Activated CD4-positive, alpha-beta T cell treated with anti-CD3 and anti-CD28 coated beads for 36 hours (primary cell): ENCODE measurements at regions of chr4 and their contacts with region 1.

Region 1: GRCh38 chr4:140359562-140360427 is 13.7 kb upstream of the SCOC start:
- DNase-seq: peak; percentile 89
- ATAC-seq: peak; percentile 97
- H3K4me3 Mint-ChIP-seq: no peak overlapping the region
- H3K27ac Mint-ChIP-seq: no peak overlapping the region
- H3K4me1 Mint-ChIP-seq: no peaks in the 10 kb centered on the region
- H3K27me3 Mint-ChIP-seq: peaks cover 3% of the 10 kb centered on the region

Region 2: GRCh38 chr4:140012688-140013486 is 346.9 kb before region 1 on chr4:
- CTCF ChIA-PET with region 1: interaction called, 15 read pairs
- POLR2A ChIA-PET with region 1: no interaction called
- intact Hi-C with region 1: loop called (anchors 1 to 2 kb)
- DNase-seq: peak; percentile 64
- ATAC-seq: peak; percentile 73
- H3K4me3 Mint-ChIP-seq: no peak overlapping the region
- H3K27ac Mint-ChIP-seq: no peak overlapping the region
- H3K4me1 Mint-ChIP-seq: peaks cover 9% of the 10 kb centered on the region
- H3K27me3 Mint-ChIP-seq: peaks cover 5% of the 10 kb centered on the region

Region 3: DNA sequence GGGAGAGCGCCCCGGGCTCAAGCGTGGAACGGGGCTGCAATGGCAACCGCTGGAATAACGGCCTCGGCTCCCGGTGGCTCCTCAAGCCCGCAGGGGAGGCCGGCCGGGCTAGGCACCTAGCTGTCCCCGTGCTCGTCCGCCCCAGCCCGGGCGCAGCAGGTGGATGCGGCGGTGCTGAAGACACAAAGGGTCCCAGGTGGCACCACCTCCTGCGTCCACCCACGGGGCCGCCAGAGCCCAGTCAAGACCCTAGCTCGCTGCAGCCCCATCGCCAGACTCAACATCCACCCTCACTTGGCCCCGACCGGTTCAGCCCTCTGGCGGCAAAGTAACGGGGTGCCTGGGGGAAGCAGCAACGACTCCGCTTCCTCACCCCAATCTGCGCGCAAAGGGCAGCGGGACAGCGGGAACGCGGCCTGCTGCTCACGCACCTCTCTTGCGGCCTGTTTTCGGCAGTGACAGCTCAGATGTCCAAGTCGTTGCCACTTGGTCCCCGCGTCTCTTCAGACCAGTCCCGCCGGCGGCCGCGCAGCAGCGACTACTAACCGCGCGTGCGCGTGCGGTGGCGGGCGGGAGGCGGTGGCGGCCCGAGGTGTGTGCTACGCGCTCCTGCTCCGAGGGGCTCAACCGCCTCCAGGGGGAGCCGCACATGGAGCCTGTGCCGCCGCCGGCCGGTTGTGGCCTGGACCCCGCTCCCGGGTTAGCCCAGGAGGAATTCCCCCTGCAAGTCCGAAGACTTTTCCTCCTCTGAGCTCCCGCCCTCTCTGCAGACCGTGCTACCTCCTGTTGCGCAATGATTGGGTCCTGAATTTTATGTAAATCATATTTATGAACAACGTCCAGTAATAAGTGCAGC is 67.5 kb after region 1 on chr4 and contains the start of gene CLGN:
- CTCF ChIA-PET with region 1: interaction called, 3 read pairs
- POLR2A ChIA-PET with region 1: no interaction called
- intact Hi-C with region 1: loop called in 1 of 2 experiments (anchors 2 kb)
- DNase-seq: peak; percentile 74
- ATAC-seq: peak; percentile 88
- H3K4me3 Mint-ChIP-seq: peak within 1 kb of the TSS; percentile 72
- H3K27ac Mint-ChIP-seq: peak within 1 kb of the TSS; percentile 20
- H3K4me1 Mint-ChIP-seq: peaks cover 5% of the 10 kb centered on the region
- H3K27me3 Mint-ChIP-seq: peaks cover 40% of the 10 kb centered on the region
- total RNA-seq, gene CLGN: 0.18 to 0.19 TPM

Region 4: GRCh38 chr4:140637836-140638235 is 278.0 kb after region 1 on chr4:
- CTCF ChIA-PET with region 1: interaction called, 16 read pairs
- POLR2A ChIA-PET with region 1: no interaction called
- intact Hi-C with region 1: loop called (anchors 1 kb)
- DNase-seq: peak; percentile 64
- ATAC-seq: peak; percentile 76
- H3K4me3 Mint-ChIP-seq: no peak overlapping the region
- H3K27ac Mint-ChIP-seq: no peak overlapping the region
- H3K4me1 Mint-ChIP-seq: no peaks in the 10 kb centered on the region
- H3K27me3 Mint-ChIP-seq: peaks cover 4% of the 10 kb centered on the region

Region 5: DNA sequence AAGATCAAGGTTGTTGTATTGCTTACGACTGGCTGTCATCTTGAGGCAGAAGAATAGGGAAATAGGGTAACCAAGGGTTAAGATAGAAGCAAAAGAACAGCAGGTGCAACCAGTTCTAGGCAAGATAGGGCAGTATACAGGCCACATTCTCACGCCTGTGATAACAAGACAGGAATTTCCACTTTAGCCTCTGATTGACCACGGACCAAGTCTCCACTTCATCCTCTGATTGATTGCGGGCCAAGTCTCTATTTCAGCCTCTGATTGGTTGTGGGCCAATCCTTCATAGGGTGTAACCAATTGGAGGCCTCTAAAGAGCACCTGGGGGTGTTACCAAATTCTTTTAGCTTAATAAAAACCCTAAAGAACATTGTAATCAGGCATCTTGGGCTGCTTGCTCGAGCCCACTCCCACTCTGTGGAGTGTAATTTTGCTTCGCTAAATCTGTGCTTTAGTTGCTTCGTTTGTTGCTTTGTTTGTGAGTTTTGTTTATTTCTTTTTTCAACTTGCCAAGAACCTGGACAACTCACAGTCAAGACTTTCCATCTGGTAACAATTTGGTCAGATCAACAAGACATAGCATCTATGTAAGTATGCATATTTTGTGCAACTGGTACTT is 405.1 kb after region 1 on chr4:
- CTCF ChIA-PET with region 1: no interaction called
- POLR2A ChIA-PET with region 1: no interaction called
- intact Hi-C with region 1: no loop called
- DNase-seq: no peak
- ATAC-seq: no peak
- H3K4me3 Mint-ChIP-seq: no peak overlapping the region
- H3K27ac Mint-ChIP-seq: no peak overlapping the region
- H3K4me1 Mint-ChIP-seq: no peaks in the 10 kb centered on the region
- H3K27me3 Mint-ChIP-seq: peaks cover 19% of the 10 kb centered on the region

Region 6: GRCh38 chr4:141133146-141133998 is 773.6 kb after region 1 on chr4 and contains the start of gene RNF150:
- CTCF ChIA-PET with region 1: no interaction called
- POLR2A ChIA-PET with region 1: no interaction called
- intact Hi-C with region 1: loop called in 1 of 2 experiments (anchors 5 kb)
- DNase-seq: peak; percentile 80
- ATAC-seq: peak; percentile 80
- H3K4me3 Mint-ChIP-seq: peak within 1 kb of the TSS; percentile 78
- H3K27ac Mint-ChIP-seq: no peak within 1 kb of the TSS
- H3K4me1 Mint-ChIP-seq: peaks cover 14% of the 10 kb centered on the region
- H3K27me3 Mint-ChIP-seq: peaks cover 57% of the 10 kb centered on the region
- total RNA-seq, gene RNF150: 0.02 to 0.14 TPM